Panc1 (cell line): ENCODE measurements at regions of chr22 and their contacts with region 1.

Region 1: DNA sequence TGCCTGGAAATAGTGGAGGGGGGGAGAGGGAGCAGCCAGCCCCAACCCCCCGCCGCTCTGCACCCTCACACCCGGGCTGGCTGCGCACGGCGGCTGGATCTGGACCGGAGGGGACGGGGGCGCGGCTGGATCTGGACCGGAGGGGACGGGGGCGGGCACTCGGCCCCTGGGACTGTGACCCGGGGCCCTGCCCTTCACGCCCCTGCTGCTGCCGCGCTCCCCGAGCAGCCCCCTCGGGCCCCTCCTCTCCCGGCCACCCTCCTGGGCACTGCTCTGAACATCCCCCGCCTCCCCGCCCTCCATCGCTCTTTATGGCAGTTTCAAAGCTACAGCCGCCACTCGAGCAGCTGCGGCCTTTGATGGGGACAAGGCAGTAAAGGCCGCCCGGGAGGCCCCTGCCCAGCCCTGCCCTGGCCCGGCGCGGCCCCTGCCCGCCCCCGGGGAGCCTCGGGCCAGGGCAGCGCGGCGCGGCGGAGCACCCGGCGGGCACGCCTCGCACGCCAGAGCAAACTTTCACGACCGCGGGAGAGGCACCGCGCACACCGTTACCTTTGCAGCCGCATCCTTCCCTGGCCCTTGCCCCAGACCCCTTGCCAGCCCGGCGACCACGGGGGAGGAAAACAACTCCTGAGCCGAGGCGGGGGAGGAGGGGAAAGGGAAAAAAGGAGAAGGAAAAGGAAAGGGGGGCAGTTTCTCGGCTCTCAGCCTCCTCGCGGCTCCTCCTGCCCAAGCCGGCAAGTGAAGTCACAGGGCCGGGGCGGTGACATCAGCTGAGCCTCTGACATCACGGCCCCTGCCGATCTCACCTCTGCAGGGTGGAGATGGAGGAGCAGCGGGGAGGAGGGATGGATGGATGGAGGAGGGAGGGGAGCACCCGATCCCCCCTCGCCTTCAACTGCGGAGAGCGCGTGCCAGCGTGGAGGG is 13.1 kb upstream of the TCF20 start:
- DNase-seq: no peak
- ATAC-seq: no peak
- H3K4me3 ChIP-seq: no peak overlapping the region
- H3K27ac ChIP-seq: no peak overlapping the region
- H3K4me1 ChIP-seq: no peaks in the 10 kb centered on the region
- H3K27me3 ChIP-seq: no peaks in the 10 kb centered on the region
- CTCF ChIP-seq: no peak

Region 2: DNA sequence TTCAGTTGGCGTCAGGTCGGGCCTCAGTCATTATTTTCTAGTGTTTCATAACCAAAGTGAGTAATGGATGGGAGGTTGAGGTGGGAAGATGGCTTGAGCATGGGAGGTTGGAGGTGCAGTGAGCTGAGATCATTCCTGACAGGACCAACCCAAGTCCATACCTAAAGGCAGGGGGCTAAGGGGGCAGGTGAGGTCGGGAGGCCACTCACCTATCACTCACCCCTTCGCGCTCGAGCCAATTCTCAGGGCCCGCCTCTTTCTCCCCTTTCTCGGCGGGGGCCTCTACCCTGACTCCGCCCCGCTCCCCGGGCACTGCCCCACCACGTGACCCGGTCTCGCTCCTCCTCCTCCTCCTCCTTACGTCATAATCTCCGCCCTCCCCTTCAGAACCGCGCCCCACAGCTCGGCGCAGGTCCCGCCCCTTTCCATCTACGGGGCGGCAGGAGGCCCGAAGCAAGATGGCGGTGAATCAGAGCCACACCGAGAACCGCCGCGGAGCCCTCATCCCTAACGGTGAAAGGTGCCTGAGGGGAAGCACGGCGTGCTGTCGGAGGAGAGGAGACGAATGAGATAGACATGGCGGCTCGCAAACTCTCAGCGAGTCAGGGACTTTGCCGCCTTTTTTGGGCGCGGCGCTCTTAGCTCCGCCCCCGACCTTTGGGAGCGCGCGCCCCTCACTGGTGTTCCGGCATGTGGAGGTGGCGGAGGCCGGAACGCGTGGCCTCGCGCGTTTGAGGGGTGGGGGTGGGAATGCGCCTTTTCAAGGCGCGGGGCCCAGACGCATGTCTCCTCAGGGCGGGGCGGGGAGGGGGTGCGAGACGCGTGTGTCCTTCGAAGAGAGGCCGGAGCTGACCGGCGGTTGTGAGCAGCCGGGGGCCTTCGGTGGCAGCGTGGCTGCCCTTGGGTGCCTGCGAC is 284.9 kb before region 1 on chr22 and contains the start of gene WBP2NL:
- CTCF ChIA-PET with region 1: no interaction called
- POLR2A ChIA-PET with region 1: no interaction called
- in situ Hi-C with region 1: no loop called
- intact Hi-C with region 1: no loop called
- DNase-seq: peak; percentile 10
- ATAC-seq: peak; percentile 89
- H3K4me3 ChIP-seq: peak within 1 kb of the TSS; percentile 30 to 54
- H3K27ac ChIP-seq: no peak within 1 kb of the TSS
- H3K4me1 ChIP-seq: no peaks in the 10 kb centered on the region
- H3K27me3 ChIP-seq: no peaks in the 10 kb centered on the region
- CTCF ChIP-seq: no peak
- total RNA-seq, gene WBP2NL: 0.44 TPM

Region 3: GRCh38 chr22:42303396-42304323 is 20.1 kb after region 1 on chr22:
- CTCF ChIA-PET with region 1: no interaction called
- POLR2A ChIA-PET with region 1: interaction called, 10 read pairs
- in situ Hi-C with region 1: no loop called
- intact Hi-C with region 1: no loop called
- DNase-seq: no peak
- ATAC-seq: peak; percentile 52; the same call in 1 of the 2 replicates
- H3K4me3 ChIP-seq: no peak overlapping the region
- H3K27ac ChIP-seq: no peak overlapping the region
- H3K4me1 ChIP-seq: peaks cover 8% of the 10 kb centered on the region
- H3K27me3 ChIP-seq: no peaks in the 10 kb centered on the region
- CTCF ChIP-seq: no peak

Region 4: DNA sequence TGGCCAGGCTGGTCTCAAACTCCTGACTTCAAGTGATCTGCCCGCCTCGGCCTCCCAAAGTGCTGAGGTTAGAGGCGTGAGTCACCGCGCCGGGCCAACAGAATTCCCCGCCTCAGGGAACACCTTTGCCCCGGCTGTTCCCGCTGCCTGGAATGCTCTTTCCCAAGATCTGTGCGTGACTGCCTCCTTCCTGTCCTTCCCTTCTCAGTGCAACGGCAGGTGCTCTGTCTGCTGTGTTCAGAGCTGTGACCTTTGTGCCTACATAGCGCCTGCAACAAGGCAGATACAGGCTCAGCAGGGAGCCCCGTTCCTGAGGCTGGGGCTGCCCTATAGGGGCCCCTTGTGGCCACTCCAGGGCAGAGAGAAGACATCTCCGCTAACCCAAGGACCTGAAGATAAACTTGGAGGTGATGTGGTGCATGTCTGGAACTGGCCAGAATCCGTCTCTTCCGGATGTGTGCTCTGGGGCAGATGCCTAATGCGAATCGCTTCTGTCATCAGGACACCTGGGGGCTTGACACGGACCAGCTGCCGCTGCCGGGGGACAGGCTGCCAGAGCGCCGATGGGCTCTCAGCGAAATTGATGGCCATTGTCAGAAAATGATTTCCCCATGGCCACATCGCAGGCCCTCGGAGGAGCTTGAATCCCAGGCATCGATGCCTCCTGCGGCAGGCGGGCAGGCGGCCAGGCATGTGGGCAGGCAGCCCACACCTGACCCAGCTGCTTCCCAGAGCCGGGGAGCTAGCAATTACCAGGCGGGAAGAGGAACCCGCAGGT is 30.5 kb after region 1 on chr22:
- CTCF ChIA-PET with region 1: interaction called, 13 read pairs
- POLR2A ChIA-PET with region 1: no interaction called
- in situ Hi-C with region 1: no loop called
- intact Hi-C with region 1: no loop called
- DNase-seq: peak; percentile 46
- ATAC-seq: peak; percentile 89
- H3K4me3 ChIP-seq: peak overlapping the region in 1 of 2 experiments; percentile 7; a peak in 1 of 4 replicates
- H3K27ac ChIP-seq: peak overlapping the region; percentile 63
- H3K4me1 ChIP-seq: peaks cover 25% of the 10 kb centered on the region
- H3K27me3 ChIP-seq: no peaks in the 10 kb centered on the region
- CTCF ChIP-seq: no peak; the same call in 1 of the 2 replicates